ENCODE measurements at regions of chr1 and their contacts with region 1.

Region 1: GRCh38 chr1:171969813-171970212 is 128.5 kb downstream of the DNM3 start:
- DNase-seq: no peak
- ATAC-seq: no peak
- H3K4me3 ChIP-seq: no peak overlapping the region
- H3K4me3 Mint-ChIP-seq: no peak overlapping the region
- H3K27ac ChIP-seq: no peak overlapping the region
- H3K27ac Mint-ChIP-seq: no peak overlapping the region
- H3K4me1 ChIP-seq: no peaks in the 10 kb centered on the region
- H3K4me1 Mint-ChIP-seq: peaks cover 0 to 4% (median 0%) of the 10 kb centered on the region in 7 donors
- H3K27me3 ChIP-seq: no peaks in the 10 kb centered on the region
- H3K27me3 Mint-ChIP-seq: peaks cover 0 to 21% (median 0%) of the 10 kb centered on the region in 5 donors

Region 2: DNA sequence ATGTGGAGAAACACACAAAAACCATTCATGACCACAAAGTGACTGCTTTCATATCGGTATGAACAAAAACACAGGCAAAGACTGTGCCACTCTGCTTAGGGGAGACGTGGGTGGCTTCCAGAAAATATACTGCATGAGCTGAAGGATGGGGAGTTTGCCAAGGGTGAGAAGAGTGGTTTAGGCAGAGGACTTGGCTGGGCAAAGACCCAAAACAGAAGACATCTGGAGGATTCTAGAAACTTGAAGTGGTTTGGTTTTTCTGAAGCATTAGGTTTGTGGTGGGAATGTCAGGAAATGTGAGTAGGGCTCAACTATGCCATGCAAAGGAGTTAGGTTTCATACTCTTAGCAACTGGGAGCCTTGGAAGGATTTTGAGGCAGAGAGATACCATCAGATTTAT is 155.1 kb before region 1 on chr1:
- CTCF ChIA-PET with region 1: no interaction called
- POLR2A ChIA-PET with region 1: no interaction called
- intact Hi-C with region 1: loop called in 1 of 2 experiments (anchors 5 kb)
- DNase-seq: no peak
- ATAC-seq: no peak
- H3K4me3 ChIP-seq: no peak overlapping the region
- H3K4me3 Mint-ChIP-seq: no peak overlapping the region
- H3K27ac ChIP-seq: no peak overlapping the region
- H3K27ac Mint-ChIP-seq: peak overlapping the region in 1 of 9 donors; percentile 6
- H3K4me1 ChIP-seq: no peaks in the 10 kb centered on the region
- H3K4me1 Mint-ChIP-seq: peaks cover 0 to 18% (median 0%) of the 10 kb centered on the region in 7 donors
- H3K27me3 ChIP-seq: no peaks in the 10 kb centered on the region
- H3K27me3 Mint-ChIP-seq: peaks cover 0 to 9% (median 0%) of the 10 kb centered on the region in 5 donors